ENCODE measurements at regions of chr1 and their contacts with region 1.

Region 1: GRCh38 chr1:161726596-161727457 is 5.5 kb downstream of the FCRLB start:
- DNase-seq: peak; percentile 69
- H3K4me3 ChIP-seq: peak overlapping the region; percentile 84
- H3K27ac ChIP-seq: peak overlapping the region; percentile 97
- H3K27me3 ChIP-seq: no peaks in the 10 kb centered on the region
- CTCF ChIP-seq: peak; percentile 8; the same call in 1 of the 2 replicates

Region 2: DNA sequence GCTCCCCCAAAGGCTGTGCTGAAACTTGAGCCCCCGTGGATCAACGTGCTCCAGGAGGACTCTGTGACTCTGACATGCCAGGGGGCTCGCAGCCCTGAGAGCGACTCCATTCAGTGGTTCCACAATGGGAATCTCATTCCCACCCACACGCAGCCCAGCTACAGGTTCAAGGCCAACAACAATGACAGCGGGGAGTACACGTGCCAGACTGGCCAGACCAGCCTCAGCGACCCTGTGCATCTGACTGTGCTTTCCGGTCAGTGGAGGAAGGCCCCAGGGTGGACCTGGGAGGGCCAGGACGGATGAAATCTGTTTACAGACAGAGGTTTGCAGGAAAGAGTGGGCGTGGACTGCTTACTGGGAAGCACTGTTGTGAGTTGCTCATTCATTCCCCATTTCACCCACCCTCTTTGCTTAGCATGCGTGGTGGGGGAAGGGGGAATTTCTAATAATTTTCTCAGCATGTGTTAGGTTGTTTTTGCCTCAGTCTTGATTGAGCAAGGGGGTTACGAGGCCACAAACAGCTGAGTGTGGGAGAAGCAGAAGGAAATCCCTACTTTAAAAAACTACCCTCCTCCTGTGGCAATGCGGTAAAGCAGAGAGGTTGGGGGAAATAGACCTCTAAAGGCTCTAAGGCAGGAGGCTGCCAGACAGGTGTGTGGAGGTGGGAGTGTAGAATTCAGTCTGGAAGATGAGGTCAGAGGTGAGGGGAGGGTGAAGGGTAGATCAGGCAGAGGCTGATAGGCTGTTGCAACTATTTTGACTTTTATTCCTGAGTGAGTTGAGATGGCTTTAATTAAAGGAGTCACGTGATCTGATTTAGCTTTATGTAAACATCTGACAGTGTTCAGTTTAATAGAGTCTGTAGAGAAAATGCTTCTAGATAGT is 220.2 kb before region 1 on chr1:
- CTCF ChIA-PET with region 1: no interaction called
- POLR2A ChIA-PET with region 1: no interaction called
- DNase-seq: no peak
- H3K4me3 ChIP-seq: no peak overlapping the region
- H3K27ac ChIP-seq: peak overlapping the region; percentile 21
- H3K27me3 ChIP-seq: no peaks in the 10 kb centered on the region
- CTCF ChIP-seq: no peak

Region 3: GRCh38 chr1:161749509-161750407 is 22.9 kb after region 1 on chr1 and contains the start of gene DUSP12:
- CTCF ChIA-PET with region 1: interaction called, 4 read pairs
- POLR2A ChIA-PET with region 1: interaction called, 20 read pairs
- DNase-seq: peak; percentile 86
- H3K4me3 ChIP-seq: peak within 1 kb of the TSS; percentile 96
- H3K27ac ChIP-seq: peak within 1 kb of the TSS; percentile 95
- H3K27me3 ChIP-seq: no peaks in the 10 kb centered on the region
- CTCF ChIP-seq: peak; percentile 11; the same call in 1 of the 2 replicates
- polyA plus RNA-seq, gene DUSP12: 34.9 and 41.1 TPM in 2 replicates

Region 4: GRCh38 chr1:161836018-161836417 is 109.2 kb after region 1 on chr1:
- CTCF ChIA-PET with region 1: no interaction called
- POLR2A ChIA-PET with region 1: no interaction called
- DNase-seq: peak; percentile 30
- H3K4me3 ChIP-seq: no peak overlapping the region
- H3K27ac ChIP-seq: no peak overlapping the region
- H3K27me3 ChIP-seq: no peaks in the 10 kb centered on the region
- CTCF ChIP-seq: no peak

Measured in AG04450 (cell line).